ENCODE measurements at regions of chr12 and their contacts with region 1.

Region 1: GRCh38 chr12:39028382-39028781 is 123.0 kb upstream of the CPNE8 start:
- DNase-seq: no peak
- H3K4me3 ChIP-seq: no peak overlapping the region
- H3K27ac ChIP-seq: no peak overlapping the region
- H3K4me1 ChIP-seq: no peaks in the 10 kb centered on the region
- H3K27me3 ChIP-seq: no peaks in the 10 kb centered on the region
- CTCF ChIP-seq: no peak

Region 2: GRCh38 chr12:38969706-38970105 is 58.7 kb before region 1 on chr12:
- CTCF ChIA-PET with region 1: no interaction called
- POLR2A ChIA-PET with region 1: no interaction called
- intact Hi-C with region 1: no loop called
- DNase-seq: no peak
- H3K4me3 ChIP-seq: no peak overlapping the region
- H3K27ac ChIP-seq: no peak overlapping the region
- H3K4me1 ChIP-seq: no peaks in the 10 kb centered on the region
- H3K27me3 ChIP-seq: no peaks in the 10 kb centered on the region
- CTCF ChIP-seq: no peak

Region 3: DNA sequence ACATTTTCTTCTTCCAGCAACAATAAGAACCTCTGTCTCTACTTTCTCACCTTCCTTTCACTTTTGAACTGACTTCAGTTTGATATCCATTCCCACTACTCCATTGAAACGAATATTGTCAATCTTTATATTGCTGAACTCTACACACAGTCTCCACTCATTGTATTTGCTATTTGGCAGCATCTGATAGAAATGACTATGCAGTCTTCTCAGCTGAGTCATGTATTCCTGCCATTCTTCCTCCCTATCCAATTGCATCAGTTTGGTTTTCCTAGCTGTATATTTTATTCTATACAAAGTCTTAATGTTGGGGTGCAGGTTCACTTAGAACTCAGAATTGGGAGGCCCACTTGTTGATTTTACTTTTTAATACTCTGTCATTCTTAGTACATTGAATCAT is 15.5 kb before region 1 on chr12:
- CTCF ChIA-PET with region 1: no interaction called
- POLR2A ChIA-PET with region 1: no interaction called
- intact Hi-C with region 1: no loop called
- DNase-seq: no peak
- H3K4me3 ChIP-seq: no peak overlapping the region
- H3K27ac ChIP-seq: no peak overlapping the region
- H3K4me1 ChIP-seq: no peaks in the 10 kb centered on the region
- H3K27me3 ChIP-seq: no peaks in the 10 kb centered on the region
- CTCF ChIP-seq: no peak

Region 4: DNA sequence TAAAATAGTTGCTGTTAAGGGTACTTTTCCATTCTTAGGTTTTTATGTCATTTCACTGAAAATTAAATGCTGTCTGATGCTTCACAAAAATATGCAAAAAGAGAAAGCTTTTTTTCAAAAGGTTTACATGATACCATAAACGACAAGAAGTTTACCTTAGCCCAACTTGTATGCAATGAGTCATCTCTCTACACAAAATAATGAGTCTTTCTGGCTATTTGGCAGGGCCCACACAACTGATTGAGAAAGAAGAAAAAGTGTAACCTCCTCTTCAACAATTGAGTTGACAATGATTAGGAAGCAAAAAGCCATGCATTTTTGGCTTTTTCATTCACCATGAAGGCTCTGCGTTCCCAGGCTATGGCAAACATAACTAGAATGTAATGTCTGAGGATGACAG is 42.4 kb after region 1 on chr12:
- CTCF ChIA-PET with region 1: no interaction called
- POLR2A ChIA-PET with region 1: no interaction called
- intact Hi-C with region 1: loop called (anchors 5 kb)
- DNase-seq: no peak
- H3K4me3 ChIP-seq: no peak overlapping the region
- H3K27ac ChIP-seq: no peak overlapping the region
- H3K4me1 ChIP-seq: no peaks in the 10 kb centered on the region
- H3K27me3 ChIP-seq: no peaks in the 10 kb centered on the region
- CTCF ChIP-seq: no peak